IMR-90 (cell line): ENCODE measurements at regions of chr5 and their contacts with region 1.

Region 1: DNA sequence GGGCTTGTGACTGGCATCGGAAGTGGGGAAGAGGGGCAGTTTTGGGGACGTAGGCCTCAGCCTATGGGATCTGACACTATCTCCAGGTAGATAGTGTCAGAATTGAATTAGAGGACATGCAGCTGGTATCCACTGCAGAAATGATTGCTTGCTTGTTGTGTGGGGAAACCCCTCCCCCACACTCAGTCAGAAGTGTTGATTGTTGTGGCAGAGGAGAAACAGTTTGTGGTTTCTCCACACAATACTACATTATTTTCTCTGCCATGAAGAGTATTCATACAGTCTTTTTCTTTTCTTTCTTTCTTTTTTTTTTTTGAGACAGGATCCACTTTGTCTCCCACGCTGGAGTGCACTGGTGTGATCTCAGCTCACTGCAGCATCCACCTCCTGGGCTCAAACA is 113.9 kb downstream of the ARRDC3 start:
- DNase-seq: no peak
- ATAC-seq: no peak
- H3K4me3 ChIP-seq: no peak overlapping the region
- H3K27ac ChIP-seq: no peak overlapping the region
- H3K4me1 ChIP-seq: peaks cover 4% of the 10 kb centered on the region; the same call in 1 of the 2 replicates
- H3K27me3 ChIP-seq: no peaks in the 10 kb centered on the region
- CTCF ChIP-seq: no peak
- POLR2A ChIP-seq: no peak
- RAD21 ChIP-seq: no peak

Region 2: DNA sequence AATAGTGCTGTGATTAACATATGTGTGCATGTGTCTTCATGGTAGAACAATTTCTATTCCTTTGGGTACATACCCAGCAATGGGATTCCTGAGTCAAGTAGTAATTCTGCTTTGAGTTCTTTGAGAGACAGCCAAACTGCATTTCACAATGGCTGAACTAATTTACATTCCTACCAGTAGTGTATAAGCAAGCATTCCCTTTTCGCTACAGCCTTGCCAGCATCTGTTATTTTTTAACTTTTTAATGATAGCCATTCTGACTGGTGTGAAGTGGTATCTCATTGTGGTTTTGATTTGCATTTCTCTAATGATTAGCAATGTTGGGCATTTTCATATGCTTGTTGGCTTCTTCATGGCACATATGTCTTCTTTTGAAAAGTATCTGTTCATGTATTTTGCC is 194.6 kb before region 1 on chr5:
- CTCF ChIA-PET with region 1: no interaction called
- POLR2A ChIA-PET with region 1: no interaction called
- dilution Hi-C with region 1: no loop called
- in situ Hi-C with region 1: no loop called
- intact Hi-C with region 1: no loop called
- DNase-seq: peak; percentile 89
- ATAC-seq: peak; percentile 77
- H3K4me3 ChIP-seq: no peak overlapping the region
- H3K27ac ChIP-seq: no peak overlapping the region
- H3K4me1 ChIP-seq: peaks cover 9% of the 10 kb centered on the region
- H3K27me3 ChIP-seq: no peaks in the 10 kb centered on the region
- CTCF ChIP-seq: peak; percentile 48
- POLR2A ChIP-seq: no peak
- RAD21 ChIP-seq: no peak

Region 3: DNA sequence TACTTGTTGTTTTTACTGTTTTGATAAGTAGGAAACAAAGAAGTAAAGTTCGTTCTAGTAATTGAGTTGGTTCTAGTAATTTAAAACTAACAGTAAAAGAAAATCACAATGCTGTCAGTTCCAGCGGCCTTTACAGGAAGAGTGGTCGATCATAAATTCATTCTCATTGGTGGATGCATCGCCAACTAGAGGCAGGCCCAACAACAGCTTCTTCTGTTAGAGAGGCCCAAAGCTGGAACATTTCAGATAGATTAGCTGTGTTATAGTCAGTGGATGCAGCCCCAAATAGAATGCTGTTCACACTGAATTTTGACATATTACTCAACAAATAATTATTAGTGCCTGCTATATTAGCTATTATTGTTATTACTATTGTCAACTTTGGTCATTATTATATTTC is 33.1 kb after region 1 on chr5:
- CTCF ChIA-PET with region 1: no interaction called
- POLR2A ChIA-PET with region 1: interaction called, 28 read pairs
- dilution Hi-C with region 1: no loop called
- in situ Hi-C with region 1: no loop called
- intact Hi-C with region 1: no loop called
- DNase-seq: no peak
- ATAC-seq: no peak
- H3K4me3 ChIP-seq: no peak overlapping the region
- H3K27ac ChIP-seq: no peak overlapping the region
- H3K4me1 ChIP-seq: no peaks in the 10 kb centered on the region; the same call in 1 of the 2 replicates
- H3K27me3 ChIP-seq: no peaks in the 10 kb centered on the region
- CTCF ChIP-seq: no peak
- POLR2A ChIP-seq: no peak
- RAD21 ChIP-seq: no peak

Region 4: GRCh38 chr5:91367374-91367773 is 98.2 kb after region 1 on chr5:
- CTCF ChIA-PET with region 1: no interaction called
- POLR2A ChIA-PET with region 1: no interaction called
- dilution Hi-C with region 1: no loop called
- in situ Hi-C with region 1: no loop called
- intact Hi-C with region 1: no loop called
- DNase-seq: no peak
- ATAC-seq: no peak; the same call in 1 of the 2 replicates
- H3K4me3 ChIP-seq: no peak overlapping the region
- H3K27ac ChIP-seq: no peak overlapping the region
- H3K4me1 ChIP-seq: no peaks in the 10 kb centered on the region
- H3K27me3 ChIP-seq: no peaks in the 10 kb centered on the region
- CTCF ChIP-seq: no peak
- POLR2A ChIP-seq: no peak; the same call in 1 of the 2 replicates
- RAD21 ChIP-seq: no peak